CD8-positive, alpha-beta T cell (primary cell): ENCODE measurements at regions of chr1 and their contacts with region 1.

Region 1: GRCh38 chr1:28893403-28894102 is 20.8 kb upstream of the EPB41 start:
- DNase-seq: peak in 4 of 9 experiments; percentile 32 to 43 (median 36)
- ATAC-seq: peak; percentile 73
- H3K4me3 ChIP-seq: no peak overlapping the region
- H3K4me3 Mint-ChIP-seq: no peak overlapping the region
- H3K27ac ChIP-seq: no peak overlapping the region
- H3K27ac Mint-ChIP-seq: no peak overlapping the region
- H3K4me1 ChIP-seq: no peaks in the 10 kb centered on the region
- H3K4me1 Mint-ChIP-seq: peaks cover 46% of the 10 kb centered on the region
- H3K27me3 ChIP-seq: no peaks in the 10 kb centered on the region
- H3K27me3 Mint-ChIP-seq: no peaks in the 10 kb centered on the region
- CTCF ChIP-seq: peak; percentile 29

Region 2: GRCh38 chr1:28867850-28868249 is 25.7 kb before region 1 on chr1:
- CTCF ChIA-PET with region 1: no interaction called
- POLR2A ChIA-PET with region 1: no interaction called
- intact Hi-C with region 1: no loop called
- DNase-seq: no peak
- ATAC-seq: no peak
- H3K4me3 ChIP-seq: no peak overlapping the region
- H3K4me3 Mint-ChIP-seq: no peak overlapping the region
- H3K27ac ChIP-seq: no peak overlapping the region
- H3K27ac Mint-ChIP-seq: no peak overlapping the region
- H3K4me1 ChIP-seq: no peaks in the 10 kb centered on the region
- H3K4me1 Mint-ChIP-seq: no peaks in the 10 kb centered on the region
- H3K27me3 ChIP-seq: no peaks in the 10 kb centered on the region
- H3K27me3 Mint-ChIP-seq: peaks cover 2% of the 10 kb centered on the region
- CTCF ChIP-seq: no peak

Region 3: GRCh38 chr1:28983509-28984310 is 90.2 kb after region 1 on chr1:
- CTCF ChIA-PET with region 1: interaction called, 3 read pairs
- POLR2A ChIA-PET with region 1: interaction called, 3 read pairs
- intact Hi-C with region 1: loop called in 1 of 2 experiments (anchors 2 kb)
- DNase-seq: peak in 5 of 9 experiments; percentile 11 to 42 (median 33)
- ATAC-seq: no peak
- H3K4me3 ChIP-seq: no peak overlapping the region
- H3K4me3 Mint-ChIP-seq: peak overlapping the region; percentile 8
- H3K27ac ChIP-seq: no peak overlapping the region
- H3K27ac Mint-ChIP-seq: peak overlapping the region; percentile 46
- H3K4me1 ChIP-seq: peaks cover 18% of the 10 kb centered on the region
- H3K4me1 Mint-ChIP-seq: peaks cover 79% of the 10 kb centered on the region
- H3K27me3 ChIP-seq: no peaks in the 10 kb centered on the region
- H3K27me3 Mint-ChIP-seq: no peaks in the 10 kb centered on the region
- CTCF ChIP-seq: peak; percentile 13